AG04450 (cell line): ENCODE measurements at regions of chr22 and their contacts with region 1.

Region 1: GRCh38 chr22:17501679-17502285 is 61.5 kb upstream of the SLC25A18 start:
- DNase-seq: peak; percentile 27
- H3K4me3 ChIP-seq: no peak overlapping the region
- H3K27ac ChIP-seq: no peak overlapping the region
- H3K27me3 ChIP-seq: no peaks in the 10 kb centered on the region
- CTCF ChIP-seq: peak; percentile 69

Region 2: DNA sequence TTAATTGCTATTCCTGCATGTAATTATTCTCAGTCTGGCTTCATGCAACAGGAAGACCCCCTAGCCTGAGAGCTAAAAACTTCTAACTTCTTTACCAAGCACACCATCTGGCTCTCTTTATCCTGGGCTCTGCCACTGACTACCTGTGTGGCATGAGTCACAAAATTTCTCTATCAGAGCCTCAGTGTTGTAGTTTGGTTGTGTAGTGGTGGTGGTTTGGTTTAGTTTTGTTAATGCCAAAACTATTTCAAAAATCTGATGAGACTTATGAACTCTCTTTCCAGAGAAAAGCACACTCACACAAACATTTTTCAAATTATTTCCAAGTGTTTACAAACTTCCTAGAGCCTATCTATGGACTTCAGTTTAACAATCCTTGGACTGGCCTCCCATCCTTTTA is 424.5 kb before region 1 on chr22:
- CTCF ChIA-PET with region 1: interaction called, 112 read pairs
- POLR2A ChIA-PET with region 1: interaction called, 7 read pairs
- DNase-seq: peak; percentile 51
- H3K4me3 ChIP-seq: no peak overlapping the region
- H3K27ac ChIP-seq: peak overlapping the region; percentile 39
- H3K27me3 ChIP-seq: no peaks in the 10 kb centered on the region
- CTCF ChIP-seq: no peak

Region 3: GRCh38 chr22:17514084-17514483 is 12.3 kb after region 1 on chr22:
- CTCF ChIA-PET with region 1: interaction called, 10 read pairs
- POLR2A ChIA-PET with region 1: no interaction called
- DNase-seq: no peak
- H3K4me3 ChIP-seq: no peak overlapping the region
- H3K27ac ChIP-seq: no peak overlapping the region
- H3K27me3 ChIP-seq: no peaks in the 10 kb centered on the region
- CTCF ChIP-seq: no peak